ENCODE measurements at regions of chr13 and their contacts with region 1.

Region 1: GRCh38 chr13:98853771-98854221 is 101.3 kb upstream of the SLC15A1 start:
- DNase-seq: peak; percentile 22 to 41
- ATAC-seq: no peak

Region 2: DNA sequence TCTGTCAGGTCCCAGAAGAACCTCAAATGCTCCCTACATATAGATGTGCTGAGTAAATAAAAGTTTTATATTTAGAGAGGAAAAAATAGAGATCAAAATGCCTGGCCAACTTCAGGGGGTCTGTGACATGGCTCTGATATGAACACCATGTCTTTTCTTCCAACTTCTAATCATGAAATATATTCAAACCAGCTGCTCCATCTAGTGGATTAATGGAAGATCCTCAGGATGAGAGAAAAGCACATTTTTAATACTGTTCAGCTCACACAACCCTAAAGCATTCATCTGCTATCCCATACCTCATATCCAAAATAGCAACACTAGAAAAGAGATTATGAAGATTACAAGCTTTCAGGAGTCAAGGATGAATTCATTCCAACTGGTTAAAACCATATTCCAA is 180.0 kb after region 1 on chr13:
- intact Hi-C with region 1: loop called in 1 of 2 experiments (anchors 10 kb)
- DNase-seq: no peak
- ATAC-seq: peak; percentile 60

Region 3: GRCh38 chr13:99425485-99426341 is 571.9 kb after region 1 on chr13:
- intact Hi-C with region 1: no loop called
- DNase-seq: peak in 1 of 2 donors; percentile 66
- ATAC-seq: no peak